Activated naive CD4-positive, alpha-beta T cell treated with anti-CD3 and anti-CD28 coated beads for 36 hours (primary cell): ENCODE measurements at regions of chr1 and their contacts with region 1.

Region 1: DNA sequence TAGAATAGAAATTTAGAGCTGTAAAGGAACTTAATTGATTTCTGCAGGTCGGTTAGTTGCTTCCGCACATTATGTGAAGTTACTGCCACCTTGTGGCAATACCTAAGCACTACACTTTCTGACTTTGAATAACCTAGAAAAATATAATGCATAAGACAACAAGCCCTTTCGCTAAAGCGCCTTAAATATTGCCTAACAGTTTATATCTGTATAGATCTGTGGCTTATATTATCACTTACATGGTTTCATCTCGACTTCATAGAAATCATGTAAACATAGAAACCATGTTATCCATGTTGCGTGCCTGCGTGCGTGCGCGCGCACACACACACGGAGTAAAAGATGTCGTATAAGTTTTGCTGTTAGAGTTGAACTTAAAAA is 10.9 kb upstream of the IFI16 start:
- DNase-seq: peak; percentile 60
- H3K4me3 Mint-ChIP-seq: no peak overlapping the region
- H3K27ac Mint-ChIP-seq: no peak overlapping the region
- H3K4me1 Mint-ChIP-seq: peaks cover 30% of the 10 kb centered on the region
- H3K27me3 Mint-ChIP-seq: no peaks in the 10 kb centered on the region

Region 2: DNA sequence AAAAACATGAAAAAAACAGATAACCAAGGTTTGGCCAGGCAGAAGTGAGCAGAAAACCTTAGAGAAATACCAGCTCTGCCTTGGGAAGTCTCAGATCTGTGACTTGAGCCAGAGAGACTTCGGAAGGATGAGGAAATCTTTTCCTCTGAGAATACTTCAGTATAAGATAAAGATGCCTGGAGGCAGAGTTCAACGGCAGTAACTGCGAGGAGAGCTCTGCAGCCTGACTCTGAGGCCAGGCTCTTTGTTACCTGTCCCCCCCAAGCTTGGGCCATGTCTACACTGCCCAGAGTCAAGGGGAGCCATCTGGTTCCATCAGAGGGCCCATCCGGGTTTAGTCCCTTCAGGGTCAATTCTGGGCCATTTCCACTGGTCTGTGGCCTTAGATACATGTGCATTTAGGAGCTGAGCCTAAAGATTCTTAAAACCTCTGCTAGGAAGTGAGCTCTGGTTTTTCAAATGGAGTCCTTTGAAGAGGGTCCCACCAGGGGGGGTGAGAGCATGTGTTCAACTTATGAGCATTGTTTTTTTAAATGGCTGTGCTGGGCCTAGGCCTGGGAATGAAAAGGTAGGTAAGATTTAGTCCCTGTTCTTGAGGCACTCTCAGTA is 996.6 kb before region 1 on chr1:
- CTCF ChIA-PET with region 1: no interaction called
- intact Hi-C with region 1: no loop called
- DNase-seq: no peak
- H3K4me3 Mint-ChIP-seq: no peak overlapping the region
- H3K27ac Mint-ChIP-seq: no peak overlapping the region
- H3K4me1 Mint-ChIP-seq: no peaks in the 10 kb centered on the region
- H3K27me3 Mint-ChIP-seq: peaks cover 10% of the 10 kb centered on the region

Region 3: GRCh38 chr1:158506369-158506987 is 492.3 kb before region 1 on chr1:
- CTCF ChIA-PET with region 1: interaction called, 4 read pairs
- intact Hi-C with region 1: loop called (anchors 1 kb)
- DNase-seq: peak; percentile 61
- H3K4me3 Mint-ChIP-seq: no peak overlapping the region
- H3K27ac Mint-ChIP-seq: no peak overlapping the region
- H3K4me1 Mint-ChIP-seq: no peaks in the 10 kb centered on the region
- H3K27me3 Mint-ChIP-seq: peaks cover 26% of the 10 kb centered on the region

Region 4: GRCh38 chr1:158716335-158716734 is 282.4 kb before region 1 on chr1:
- CTCF ChIA-PET with region 1: no interaction called
- intact Hi-C with region 1: loop called (anchors 5 kb)
- DNase-seq: no peak
- H3K4me3 Mint-ChIP-seq: no peak overlapping the region
- H3K27ac Mint-ChIP-seq: no peak overlapping the region
- H3K4me1 Mint-ChIP-seq: peaks cover 4% of the 10 kb centered on the region
- H3K27me3 Mint-ChIP-seq: peaks cover 19% of the 10 kb centered on the region

Region 5: GRCh38 chr1:158819461-158820443 is 179.0 kb before region 1 on chr1:
- CTCF ChIA-PET with region 1: interaction called, 5 read pairs
- intact Hi-C with region 1: loop called (anchors 5 kb)
- DNase-seq: peak; percentile 7
- H3K4me3 Mint-ChIP-seq: no peak overlapping the region
- H3K27ac Mint-ChIP-seq: no peak overlapping the region
- H3K4me1 Mint-ChIP-seq: peaks cover 12% of the 10 kb centered on the region
- H3K27me3 Mint-ChIP-seq: peaks cover 15% of the 10 kb centered on the region

Region 6: GRCh38 chr1:159009704-159010361 is 11.1 kb after region 1 on chr1 and contains the start of gene IFI16:
- CTCF ChIA-PET with region 1: interaction called, 7 read pairs
- intact Hi-C with region 1: loop called (anchors 1 kb)
- DNase-seq: peak; percentile 82
- H3K4me3 Mint-ChIP-seq: peak within 1 kb of the TSS; percentile 91
- H3K27ac Mint-ChIP-seq: peak within 1 kb of the TSS; percentile 99
- H3K4me1 Mint-ChIP-seq: peaks cover 39% of the 10 kb centered on the region
- H3K27me3 Mint-ChIP-seq: no peaks in the 10 kb centered on the region
- total RNA-seq, gene IFI16: 287 to 288 TPM

Region 7: GRCh38 chr1:159098596-159098995 is 99.8 kb after region 1 on chr1:
- CTCF ChIA-PET with region 1: no interaction called
- intact Hi-C with region 1: no loop called
- DNase-seq: no peak
- H3K4me3 Mint-ChIP-seq: no peak overlapping the region
- H3K27ac Mint-ChIP-seq: no peak overlapping the region
- H3K4me1 Mint-ChIP-seq: no peaks in the 10 kb centered on the region
- H3K27me3 Mint-ChIP-seq: peaks cover 16% of the 10 kb centered on the region

Region 8: DNA sequence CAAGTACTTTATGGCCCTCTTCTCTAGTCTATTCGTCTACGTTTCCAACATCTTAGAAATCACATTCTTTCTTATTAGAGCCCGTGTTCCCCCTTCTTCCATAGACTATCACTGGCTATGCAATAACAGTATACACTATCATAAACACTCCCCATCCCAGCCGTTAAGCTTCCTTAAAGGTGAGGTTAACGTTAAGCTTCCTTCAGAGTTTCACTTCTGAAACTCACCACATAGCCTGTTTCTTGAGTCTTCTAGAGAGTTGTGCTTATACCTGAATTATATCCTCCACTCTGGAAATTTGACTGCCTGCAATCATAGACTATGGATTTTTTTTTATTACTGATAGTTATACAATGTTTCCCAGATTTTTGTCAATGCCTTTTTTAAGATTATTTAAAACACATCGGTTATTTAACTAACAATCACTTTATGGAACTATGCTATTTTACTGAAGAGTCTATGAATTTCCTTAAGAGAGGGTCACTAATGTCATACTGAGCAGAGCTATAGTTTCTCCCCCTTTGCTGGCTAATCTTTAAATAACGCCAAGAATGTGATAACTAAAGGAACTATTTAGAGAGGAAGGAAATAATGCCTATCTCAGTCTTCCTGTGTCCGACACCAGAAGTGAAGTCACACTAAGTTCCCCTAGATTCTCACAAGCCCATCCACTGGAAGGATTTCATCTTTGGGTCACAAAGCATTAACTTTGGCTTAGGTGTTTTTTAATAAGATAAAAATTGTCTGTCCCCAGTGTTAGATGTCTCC is 320.2 kb after region 1 on chr1:
- CTCF ChIA-PET with region 1: no interaction called
- intact Hi-C with region 1: no loop called
- DNase-seq: no peak
- H3K4me3 Mint-ChIP-seq: no peak overlapping the region
- H3K27ac Mint-ChIP-seq: no peak overlapping the region
- H3K4me1 Mint-ChIP-seq: no peaks in the 10 kb centered on the region
- H3K27me3 Mint-ChIP-seq: peaks cover 15% of the 10 kb centered on the region